ENCODE measurements at regions of chr13 and their contacts with region 1.

Region 1: DNA sequence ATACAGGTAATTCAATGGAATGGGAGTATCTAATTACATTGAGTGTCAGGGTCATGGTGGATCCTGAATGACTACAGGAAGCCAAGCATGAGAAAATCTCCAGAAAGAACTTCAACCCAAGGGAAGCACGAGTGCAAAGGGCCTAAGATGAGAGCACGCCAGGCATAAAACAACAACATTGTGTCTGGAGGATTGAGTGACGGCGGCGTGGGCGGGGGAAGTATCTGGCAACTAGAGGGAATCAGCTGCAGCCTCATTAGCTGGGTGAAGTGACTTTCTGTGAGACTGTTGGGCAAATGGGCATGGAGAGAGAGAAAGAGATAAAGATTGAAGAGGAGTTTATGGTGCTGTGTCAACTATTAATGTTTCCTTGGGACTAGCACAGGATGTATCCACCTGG is 194.3 kb downstream of the GPC6 start:
- DNase-seq: no peak
- ATAC-seq: no peak
- H3K4me3 ChIP-seq: no peak overlapping the region
- H3K27ac ChIP-seq: no peak overlapping the region
- H3K4me1 ChIP-seq: no peaks in the 10 kb centered on the region
- H3K27me3 ChIP-seq: no peaks in the 10 kb centered on the region
- CTCF ChIP-seq: no peak
- EP300 ChIP-seq: no peak
- POLR2A ChIP-seq: no peak
- RAD21 ChIP-seq: no peak

Region 2: GRCh38 chr13:93289053-93289452 is 131.8 kb before region 1 on chr13:
- CTCF ChIA-PET with region 1: no interaction called
- POLR2A ChIA-PET with region 1: no interaction called
- in situ Hi-C with region 1: loop called (anchors 5 kb)
- intact Hi-C with region 1: no loop called
- DNase-seq: no peak
- ATAC-seq: no peak
- H3K4me3 ChIP-seq: no peak overlapping the region
- H3K27ac ChIP-seq: no peak overlapping the region
- H3K4me1 ChIP-seq: no peaks in the 10 kb centered on the region
- H3K27me3 ChIP-seq: no peaks in the 10 kb centered on the region
- CTCF ChIP-seq: no peak
- EP300 ChIP-seq: no peak
- POLR2A ChIP-seq: no peak
- RAD21 ChIP-seq: no peak

Measured in HepG2 (cell line).